ENCODE measurements at regions of chr14 and their contacts with region 1.

Region 1: DNA sequence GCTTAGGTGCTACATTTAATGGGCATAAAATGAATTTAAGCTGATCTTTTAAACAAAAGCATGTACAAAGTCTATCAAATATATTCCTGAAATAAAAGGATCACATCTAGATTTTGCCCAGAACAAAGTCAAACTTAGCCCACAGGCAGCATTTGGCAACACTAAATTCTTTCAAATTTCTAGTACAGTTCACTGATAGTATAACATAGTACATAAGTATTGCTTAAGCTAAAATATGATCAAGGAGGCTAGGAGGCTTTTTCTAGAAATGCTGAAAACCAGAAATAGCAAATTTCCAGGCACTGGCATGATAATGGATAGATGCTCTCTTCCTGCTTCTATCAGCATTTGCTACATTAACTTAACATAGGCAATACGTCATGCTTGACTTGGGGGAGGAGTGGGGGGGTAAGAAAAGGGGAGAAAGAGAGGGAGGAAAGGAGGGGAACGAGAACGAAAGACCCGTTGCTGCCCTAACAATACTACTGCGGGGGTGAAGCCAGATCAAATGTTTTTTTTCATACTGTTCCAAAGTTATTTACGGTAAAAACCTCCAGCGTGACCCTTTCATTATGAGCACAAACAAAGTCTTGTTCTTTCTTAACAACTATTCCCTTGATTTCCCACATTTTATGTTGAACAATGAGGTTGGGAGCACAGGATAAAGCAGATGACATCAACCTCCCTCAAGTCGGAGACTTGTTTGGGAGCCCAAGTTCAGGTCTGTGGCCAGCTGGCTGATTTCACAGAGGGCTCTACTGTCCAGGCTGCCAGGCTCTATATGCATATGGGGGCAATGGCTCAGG is 10.6 kb downstream of the TMED10 start:
- DNase-seq: peak; percentile 55 to 96 (median 81)

Region 2: DNA sequence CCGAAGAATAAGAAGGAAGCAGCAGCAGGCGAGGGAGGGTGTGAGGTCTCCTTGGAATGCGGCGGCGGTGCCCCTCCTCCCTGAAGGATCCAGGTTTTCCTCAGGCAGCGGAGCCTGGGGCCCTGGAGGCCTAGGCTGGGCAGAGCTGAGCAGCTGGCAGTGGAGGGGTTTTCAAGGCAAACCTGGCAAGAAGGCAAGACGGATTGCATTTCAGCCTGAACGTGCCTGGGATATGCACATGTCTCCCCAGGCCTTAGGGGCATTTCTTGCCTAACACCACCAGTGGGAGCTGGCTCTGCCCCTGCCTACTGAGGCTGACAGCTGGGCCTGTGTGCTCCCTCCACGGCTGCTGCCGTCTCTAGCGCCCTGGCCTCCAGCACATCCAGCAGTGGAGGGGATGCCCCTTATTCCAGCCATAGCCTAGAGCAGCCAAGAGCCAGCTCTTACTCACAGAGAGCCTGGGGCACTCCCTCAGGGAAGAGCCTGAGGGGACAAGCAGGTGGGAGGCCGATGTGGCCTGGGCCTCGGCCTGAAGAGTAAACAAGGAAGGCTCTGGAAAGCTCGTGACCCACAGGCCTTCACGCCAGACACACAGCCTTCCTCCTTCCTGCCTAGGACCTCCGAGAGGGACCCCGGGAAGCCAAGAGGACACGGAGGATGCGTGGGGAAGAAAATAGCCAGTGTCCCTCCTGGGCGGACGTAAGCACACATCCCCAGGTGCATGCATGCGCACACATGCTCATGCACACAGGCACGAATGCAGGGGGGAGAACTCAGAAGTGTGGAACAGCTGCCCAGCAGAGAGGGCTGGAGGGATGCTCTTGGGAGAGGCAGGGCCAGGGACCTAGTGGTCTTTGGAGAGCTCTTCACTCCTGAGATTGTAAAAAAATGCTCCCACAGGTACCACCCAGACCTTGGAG is 186.1 kb before region 1 on chr14:
- intact Hi-C with region 1: no loop called
- DNase-seq: peak in 3 of 42 donors; percentile 10 to 37 (median 32)

Region 3: GRCh38 chr14:75069045-75069810 is 96.6 kb before region 1 on chr14 and contains the start of gene ZC2HC1C:
- intact Hi-C with region 1: no loop called
- DNase-seq: peak; percentile 89 to 99 (median 96)

Region 4: DNA sequence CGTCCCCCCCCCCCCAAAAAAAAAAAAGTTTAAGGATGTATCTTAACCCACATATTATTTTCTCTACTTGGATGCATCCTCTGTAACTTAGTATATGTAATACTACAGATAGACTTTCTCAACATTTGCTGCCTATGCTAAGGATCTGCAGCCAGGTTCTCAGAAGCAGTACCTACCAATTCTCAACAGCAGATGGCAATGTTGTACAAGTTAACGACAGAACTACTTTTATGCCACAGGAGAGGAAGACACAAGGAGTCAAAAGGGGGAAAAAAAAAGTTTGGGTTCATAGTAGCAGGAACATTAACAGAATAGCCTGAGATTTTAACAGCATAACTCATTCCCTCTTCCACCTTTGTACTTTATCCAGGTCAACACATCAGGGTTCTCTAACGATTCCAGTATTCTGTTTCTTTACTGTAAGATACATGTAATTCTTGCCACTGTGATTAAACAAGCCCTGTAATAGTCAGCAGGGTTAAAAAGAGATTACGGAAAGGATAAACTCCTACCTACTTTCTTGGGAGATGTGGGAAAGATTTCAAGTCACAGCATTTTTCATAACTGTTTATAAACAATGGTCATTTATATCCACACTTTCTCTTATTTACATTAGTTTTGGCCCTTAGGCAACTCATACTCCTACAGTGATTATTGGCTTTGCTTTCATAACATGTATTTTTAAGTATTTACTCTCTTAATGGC is 33.3 kb before region 1 on chr14:
- intact Hi-C with region 1: loop called (anchors 5 kb)
- DNase-seq: peak in 21 of 42 donors; percentile 34 to 88 (median 67)

Region 5: GRCh38 chr14:75333606-75334548 is 168.1 kb after region 1 on chr14:
- intact Hi-C with region 1: no loop called
- DNase-seq: peak in 33 of 42 donors; percentile 5 to 65 (median 34)

Region 6: DNA sequence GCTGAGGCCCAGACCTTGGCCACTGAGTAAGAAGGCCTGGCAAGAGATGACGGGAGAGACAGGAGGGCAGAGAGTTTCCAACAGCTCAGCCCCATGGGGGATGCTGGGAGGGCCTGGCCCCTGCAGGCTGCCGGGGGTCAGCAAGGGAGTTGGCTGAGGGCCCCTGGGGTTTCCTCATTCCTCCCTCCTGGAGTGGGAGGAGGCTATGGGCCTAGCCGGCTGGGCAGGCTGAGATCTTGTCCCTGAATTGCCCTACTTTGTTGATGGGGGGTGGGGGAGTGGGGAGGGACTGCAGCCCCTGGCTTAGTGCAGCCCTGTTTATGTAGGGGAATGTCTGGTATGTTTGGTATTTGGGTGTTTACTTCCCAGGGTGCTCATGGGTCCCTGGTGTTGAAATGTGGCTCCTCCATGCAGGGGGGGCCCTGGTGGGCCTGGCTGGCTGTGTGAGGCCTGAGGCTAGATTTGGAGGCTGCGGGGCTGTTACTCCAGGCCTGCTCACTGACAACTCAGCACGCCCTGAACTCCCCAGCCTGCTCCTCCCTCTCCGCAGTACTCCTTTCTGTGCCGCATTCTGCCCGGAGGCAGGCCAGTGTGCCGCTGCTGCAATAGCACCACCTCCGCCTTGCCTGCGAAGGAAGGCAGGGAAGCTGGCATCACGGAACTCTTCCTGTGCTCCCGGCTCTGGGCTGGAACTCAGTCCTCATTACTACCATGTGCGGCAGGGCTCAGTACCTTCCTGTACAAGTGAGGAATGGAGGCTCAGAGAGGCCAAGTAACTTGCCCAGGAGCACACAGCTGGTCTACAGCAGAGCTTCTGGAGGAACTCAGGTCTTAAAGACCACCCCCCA is 287.3 kb after region 1 on chr14:
- intact Hi-C with region 1: no loop called
- DNase-seq: peak in 30 of 42 donors; percentile 23 to 79 (median 52)

Measured in head of caudate nucleus (tissue), 42 donors.